Tibial artery (tissue), 4 donors: ENCODE measurements at regions of chr13 and their contacts with region 1.

Region 1: DNA sequence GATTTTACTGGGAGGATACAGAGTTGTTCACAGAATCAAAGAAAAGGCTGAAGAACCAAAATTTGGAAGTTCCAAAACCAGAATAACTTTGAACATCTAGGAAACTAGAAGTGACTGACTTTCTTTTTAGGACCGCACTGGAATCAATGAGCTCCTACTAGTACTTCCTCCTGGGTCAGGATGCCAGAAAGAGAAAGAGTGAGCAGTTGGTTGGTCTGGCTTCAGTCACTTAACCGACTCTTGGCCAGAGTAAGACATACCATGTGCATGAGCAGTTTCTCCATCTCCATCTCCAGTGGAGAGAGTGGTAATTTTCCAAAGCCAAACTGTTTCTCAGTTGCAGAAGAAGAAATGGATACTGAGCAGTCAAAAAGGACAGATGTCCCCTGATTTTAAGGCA is 27.1 kb upstream of the MTUS2 start:
- DNase-seq: no peak
- H3K4me3 ChIP-seq: no peak overlapping the region
- H3K27ac ChIP-seq: no peak overlapping the region
- H3K4me1 ChIP-seq: no peaks in the 10 kb centered on the region
- H3K27me3 ChIP-seq: peaks cover 0 to 8% of the 10 kb centered on the region in 2 donors
- CTCF ChIP-seq: no peak

Region 2: GRCh38 chr13:28679628-28680027 is 113.4 kb before region 1 on chr13:
- intact Hi-C with region 1: loop called (anchors 10 kb)
- DNase-seq: no peak
- H3K4me3 ChIP-seq: no peak overlapping the region
- H3K27ac ChIP-seq: no peak overlapping the region
- H3K4me1 ChIP-seq: no peaks in the 10 kb centered on the region
- H3K27me3 ChIP-seq: no peaks in the 10 kb centered on the region
- CTCF ChIP-seq: peak; percentile 16 to 28

Region 3: DNA sequence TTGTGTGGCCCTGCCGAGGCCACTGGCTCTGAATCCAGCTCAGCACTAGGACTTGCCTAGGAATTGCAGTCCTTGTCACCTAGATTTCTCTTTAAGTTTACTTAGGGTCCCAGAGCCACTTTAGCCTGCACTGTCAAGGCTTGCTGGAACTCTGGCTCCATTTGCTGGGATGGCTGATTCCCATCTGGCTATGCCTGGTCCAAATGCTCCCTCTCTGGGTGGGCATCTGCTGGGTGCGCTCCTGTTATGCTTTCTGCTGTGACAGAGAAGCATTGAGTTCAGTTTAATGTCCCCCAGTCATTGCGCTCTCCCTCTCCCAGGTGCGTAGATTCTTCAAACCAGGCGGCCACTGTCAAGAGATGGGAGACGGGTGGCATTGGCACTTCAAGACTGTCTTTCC is 129.3 kb after region 1 on chr13:
- intact Hi-C with region 1: no loop called
- DNase-seq: no peak
- H3K4me3 ChIP-seq: no peak overlapping the region
- H3K27ac ChIP-seq: no peak overlapping the region
- H3K4me1 ChIP-seq: no peaks in the 10 kb centered on the region
- H3K27me3 ChIP-seq: no peaks in the 10 kb centered on the region
- CTCF ChIP-seq: no peak